Left cardiac atrium (tissue), 4 donors: ENCODE measurements at regions of chr10 and their contacts with region 1.

Region 1: DNA sequence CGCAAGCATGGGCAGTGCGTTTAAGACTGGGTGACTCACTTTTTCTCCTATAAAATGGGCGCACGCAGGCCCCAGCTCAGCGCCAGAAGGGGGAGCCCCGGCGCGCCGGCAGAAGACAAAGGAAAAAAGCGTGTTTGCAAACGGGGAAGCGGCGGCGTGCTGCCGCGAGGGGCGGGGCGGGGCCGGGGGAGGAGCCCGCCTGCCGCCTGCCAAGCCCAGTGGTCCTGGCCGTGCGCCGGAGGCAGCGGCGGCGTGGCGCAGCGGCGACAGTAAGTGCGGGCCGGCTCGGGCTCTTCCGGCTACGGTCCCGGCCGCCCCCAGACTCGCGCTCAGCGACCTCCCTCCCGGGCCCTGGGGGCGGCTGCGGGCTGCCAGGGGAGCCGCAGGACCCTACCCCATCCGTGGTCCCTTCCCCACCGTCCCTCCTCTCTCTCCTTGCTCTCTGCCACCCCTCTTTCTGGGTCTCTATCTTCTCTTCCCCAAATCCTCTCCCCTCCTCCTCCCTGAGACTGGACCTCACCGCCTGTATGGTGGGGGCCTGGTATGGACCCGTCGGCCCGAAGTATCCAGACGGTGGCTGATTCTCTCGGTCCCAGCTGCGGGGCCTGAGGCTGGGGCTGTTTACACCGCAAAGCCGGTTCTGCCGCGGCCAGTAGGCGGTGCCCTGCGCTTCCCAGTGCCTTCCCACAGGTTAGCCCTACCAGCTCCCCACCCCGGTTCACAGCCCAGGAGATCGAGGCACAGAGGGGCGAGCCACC is at the start of gene SLC29A3:
- DNase-seq: peak; percentile 84
- ATAC-seq: peak; percentile 94 to 96
- total RNA-seq, gene SLC29A3: 2.5 to 3.6 TPM

Region 2: DNA sequence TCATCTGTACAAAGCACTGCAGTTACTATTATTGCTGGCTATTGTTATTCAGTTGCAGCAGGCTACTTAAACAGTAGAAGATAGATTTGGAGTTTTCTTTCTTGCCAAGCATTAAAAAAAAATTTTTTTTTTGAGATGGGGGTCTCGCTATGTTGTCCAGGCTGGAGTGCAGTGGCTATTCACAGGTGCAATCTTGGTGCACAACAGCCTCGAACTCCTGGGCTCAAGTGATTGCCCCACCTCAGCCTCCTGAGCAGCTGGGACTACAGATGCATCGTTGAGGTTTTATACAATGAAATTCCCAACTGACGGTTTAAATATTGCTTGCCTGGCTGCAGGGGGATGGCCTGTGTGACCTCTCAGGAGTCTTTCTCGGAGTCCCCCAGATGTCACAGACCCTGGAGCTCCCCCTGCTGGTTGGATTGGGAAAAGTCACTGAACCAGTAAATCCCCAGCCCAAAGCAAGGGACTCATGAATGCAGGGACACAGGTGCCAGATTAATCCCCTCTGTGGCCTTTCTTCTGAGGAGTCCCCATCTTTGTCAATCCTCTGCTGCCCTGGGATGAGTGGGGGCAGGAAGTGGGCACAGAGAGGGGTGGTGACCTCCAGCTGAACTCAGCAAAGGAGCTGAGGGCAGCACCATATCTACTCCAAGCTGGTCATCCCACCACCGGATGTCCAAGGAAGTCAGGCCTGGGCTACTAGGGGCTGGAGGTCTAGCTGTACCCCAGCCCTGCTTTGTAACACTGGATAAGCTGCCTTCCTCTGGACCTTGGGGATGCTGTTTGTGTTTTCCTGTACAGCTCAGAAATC is 250.8 kb after region 1 on chr10:
- intact Hi-C with region 1: loop called (anchors 5 to 10 kb)
- DNase-seq: peak; percentile 73
- ATAC-seq: peak; percentile 60 to 63

Region 3: GRCh38 chr10:71708301-71708703 is 389.1 kb after region 1 on chr10:
- intact Hi-C with region 1: loop called in 1 of 2 experiments (anchors 5 kb)
- DNase-seq: peak; percentile 74
- ATAC-seq: peak; percentile 33 to 40

Region 4: DNA sequence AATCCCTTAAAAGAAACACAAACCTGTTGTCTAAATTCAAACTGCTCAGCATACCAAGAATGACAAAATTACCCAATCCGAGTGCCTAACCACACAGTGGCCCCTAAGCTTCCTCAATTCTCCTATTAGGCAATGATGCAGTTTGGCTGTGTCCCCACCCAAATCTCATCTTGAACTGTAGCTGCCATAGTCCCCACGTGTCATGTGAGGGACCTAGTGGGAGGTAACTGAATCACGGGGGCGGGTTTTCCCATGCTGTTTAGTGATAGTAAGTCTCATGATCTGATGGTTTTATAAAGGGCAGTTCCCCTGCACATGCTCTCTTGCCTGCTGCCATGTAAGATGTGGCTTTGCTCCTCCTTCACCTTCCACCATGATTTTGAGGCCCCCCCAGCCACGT is 509.9 kb after region 1 on chr10:
- intact Hi-C with region 1: loop called in 1 of 2 experiments (anchors 10 kb)
- DNase-seq: peak; percentile 64
- ATAC-seq: peak; percentile 44 to 61